Right ventricle myocardium inferior (tissue), 1 donor: ENCODE measurements at regions of chr15 and their contacts with region 1.

Region 1: DNA sequence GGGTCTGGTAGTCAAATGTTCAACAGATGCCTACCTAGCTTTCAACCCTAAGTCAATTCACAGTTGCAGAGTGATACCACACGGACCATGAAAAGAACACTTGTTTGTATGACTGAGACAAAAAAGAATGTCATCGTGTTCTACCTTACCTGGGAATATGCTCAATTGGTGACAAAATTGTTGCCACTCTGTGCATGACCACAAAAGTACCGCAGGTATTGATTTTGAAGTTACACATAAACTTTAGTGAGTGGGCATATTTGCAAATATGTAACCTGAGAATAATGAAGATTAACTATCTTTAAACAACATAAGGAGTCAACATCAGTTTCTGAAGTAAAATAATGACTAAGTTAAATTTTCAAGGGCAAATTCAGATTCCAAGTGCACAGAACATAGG is 53.4 kb upstream of the SNRPN start:
- DNase-seq: no peak
- ATAC-seq: no peak

Region 2: GRCh38 chr15:24944954-24945353 is 43.5 kb after region 1 on chr15:
- intact Hi-C with region 1: loop called (anchors 5 kb)
- DNase-seq: no peak
- ATAC-seq: no peak

Region 3: DNA sequence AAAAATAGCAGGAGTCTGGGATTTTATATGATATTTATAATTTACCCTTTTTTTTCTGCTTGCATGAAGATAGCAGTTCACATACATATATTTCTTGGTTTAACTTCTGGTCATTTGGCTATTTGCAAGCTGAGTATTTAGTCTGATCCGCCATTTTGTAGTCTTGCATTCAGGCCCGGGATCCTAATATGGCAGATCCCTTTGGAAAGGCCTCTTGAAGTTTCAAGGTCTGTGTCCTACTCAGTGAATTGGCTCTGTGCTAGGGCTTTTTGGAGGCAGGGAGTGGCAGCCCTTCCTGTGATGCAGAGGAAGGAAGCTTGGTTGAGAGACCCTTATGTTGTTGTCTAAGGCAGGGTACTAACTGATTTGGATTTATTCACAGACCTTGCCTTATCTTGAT is 56.3 kb after region 1 on chr15:
- intact Hi-C with region 1: no loop called
- DNase-seq: no peak
- ATAC-seq: no peak